ENCODE measurements at regions of chrX and their contacts with region 1.

Region 1: DNA sequence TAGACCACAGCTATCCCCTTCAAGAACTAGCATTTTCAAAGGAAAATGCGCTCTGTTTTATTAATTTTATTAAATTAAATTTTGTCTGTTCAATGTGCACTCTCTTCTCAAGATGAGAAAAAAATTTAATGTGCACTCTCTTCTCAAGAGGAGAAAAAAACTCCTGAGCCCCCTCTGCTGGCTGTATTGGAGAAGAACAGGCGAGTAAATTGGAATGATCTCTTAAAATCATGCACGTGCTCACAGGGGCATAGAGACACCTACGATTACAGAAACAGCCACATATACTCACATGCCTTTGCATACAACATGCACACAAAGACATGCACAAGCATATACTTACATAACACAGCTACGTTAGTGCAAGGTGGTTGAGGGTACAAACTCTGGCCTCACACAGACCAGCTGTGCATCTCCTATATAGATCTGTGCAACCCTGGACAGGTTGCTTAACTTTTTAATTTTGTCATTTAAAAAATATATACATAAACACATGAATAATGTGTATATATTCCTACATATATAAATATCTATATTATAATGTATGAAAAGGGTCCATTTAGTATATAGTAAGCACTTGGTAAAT is 176.2 kb upstream of the CXorf66 start:
- DNase-seq: peak; percentile 29 to 49 (median 40)
- ATAC-seq: peak; percentile 68
- H3K4me3 ChIP-seq: no peak overlapping the region
- H3K27ac ChIP-seq: no peak overlapping the region
- H3K4me1 ChIP-seq: no peaks in the 10 kb centered on the region
- H3K27me3 ChIP-seq: no peaks in the 10 kb centered on the region
- CTCF ChIP-seq: peak; percentile 34 to 57 (median 47); a peak in 5 of 6 replicates
- EP300 ChIP-seq: no peak
- POLR2A ChIP-seq: no peak
- RAD21 ChIP-seq: peak; percentile 11 to 46; a peak in 2 of 4 replicates

Region 2: GRCh38 chrX:140071037-140071436 is 70.5 kb before region 1 on chrX:
- CTCF ChIA-PET with region 1: no interaction called
- POLR2A ChIA-PET with region 1: no interaction called
- in situ Hi-C with region 1: loop called (anchors 5 kb)
- intact Hi-C with region 1: no loop called
- DNase-seq: no peak
- ATAC-seq: no peak
- H3K4me3 ChIP-seq: no peak overlapping the region
- H3K27ac ChIP-seq: no peak overlapping the region
- H3K4me1 ChIP-seq: no peaks in the 10 kb centered on the region
- H3K27me3 ChIP-seq: no peaks in the 10 kb centered on the region; a peak in 1 of 5 replicates
- CTCF ChIP-seq: no peak
- EP300 ChIP-seq: no peak
- POLR2A ChIP-seq: no peak
- RAD21 ChIP-seq: no peak